ENCODE measurements at regions of chr17 and their contacts with region 1.

Region 1: DNA sequence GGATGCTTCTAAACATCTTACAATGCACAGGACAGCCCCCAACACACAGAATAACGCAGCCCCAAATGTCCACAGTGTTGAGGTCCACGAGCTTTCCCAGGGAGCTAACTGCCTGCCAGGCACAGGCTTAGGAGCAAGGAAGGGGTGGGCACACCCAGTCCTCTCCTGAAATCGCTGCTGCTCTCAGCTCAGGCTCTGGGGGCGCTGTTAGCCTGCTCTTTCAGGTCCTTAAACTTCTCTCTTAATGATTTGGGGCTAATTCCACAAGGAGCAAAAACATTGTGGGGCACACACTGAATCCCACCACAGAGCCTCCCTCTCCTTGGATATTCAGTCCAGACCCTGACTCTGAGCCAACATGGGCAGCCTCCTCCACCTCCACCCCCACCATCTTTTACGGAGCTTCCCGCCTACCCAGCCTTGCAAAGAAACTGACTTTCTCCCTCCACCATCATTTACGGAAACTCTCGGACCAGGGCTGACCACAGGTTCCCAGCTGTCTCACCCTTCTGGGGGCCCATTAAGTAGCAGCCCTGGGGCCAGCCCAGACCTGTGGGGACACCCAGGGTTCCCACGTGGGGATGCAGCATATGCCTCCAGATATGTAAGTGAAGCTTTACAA is 1.1 kb downstream of the CD300H start:
- H3K4me3 ChIP-seq: no peak overlapping the region
- H3K27ac ChIP-seq: no peak overlapping the region
- H3K4me1 ChIP-seq: no peaks in the 10 kb centered on the region
- CTCF ChIP-seq: peak; percentile 54

Region 2: DNA sequence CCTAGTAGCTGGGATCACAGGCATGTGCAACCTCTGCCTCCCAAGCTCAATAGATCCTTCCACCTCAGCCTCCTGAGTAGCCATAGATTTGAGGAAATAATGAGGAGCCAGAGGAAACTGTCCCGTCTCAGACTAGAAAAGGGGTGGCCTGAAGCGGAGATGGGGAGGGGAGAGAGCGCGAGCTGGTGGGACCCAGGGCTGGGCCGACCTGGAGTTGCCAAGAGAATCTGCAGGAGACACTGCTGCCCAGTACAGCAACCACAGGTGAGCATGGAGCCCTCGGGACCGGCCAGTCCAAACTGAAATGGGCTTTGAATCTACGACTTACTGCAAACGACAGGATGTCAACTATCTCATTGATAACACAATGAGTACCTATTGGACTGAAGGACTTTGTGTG is 75.5 kb before region 1 on chr17:
- CTCF ChIA-PET with region 1: no interaction called
- POLR2A ChIA-PET with region 1: no interaction called
- H3K4me3 ChIP-seq: no peak overlapping the region
- H3K27ac ChIP-seq: no peak overlapping the region
- H3K4me1 ChIP-seq: no peaks in the 10 kb centered on the region
- CTCF ChIP-seq: no peak

Region 3: GRCh38 chr17:74508156-74508555 is 58.1 kb before region 1 on chr17:
- CTCF ChIA-PET with region 1: interaction called, 11 read pairs
- POLR2A ChIA-PET with region 1: no interaction called
- H3K4me3 ChIP-seq: no peak overlapping the region
- H3K27ac ChIP-seq: no peak overlapping the region
- H3K4me1 ChIP-seq: no peaks in the 10 kb centered on the region
- CTCF ChIP-seq: no peak

Region 4: DNA sequence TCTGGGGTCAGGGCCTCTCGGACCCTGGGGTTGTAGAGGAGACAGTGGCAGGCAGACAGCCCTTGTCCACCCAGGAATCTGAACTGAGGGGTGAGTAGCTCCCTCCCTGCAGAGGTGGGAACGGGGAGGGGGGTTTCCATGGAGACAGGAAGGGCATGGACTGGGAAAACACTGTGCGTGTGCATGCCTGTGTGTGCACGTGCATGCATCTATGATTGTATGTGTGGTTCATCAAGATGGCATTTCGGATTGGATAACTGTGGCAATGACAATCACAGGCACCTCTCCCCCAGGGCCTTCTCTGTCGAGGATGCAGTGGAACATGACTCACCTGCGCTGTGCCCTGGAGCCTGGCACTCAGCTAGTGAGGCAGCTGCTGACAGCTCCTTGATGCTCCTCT is 14.2 kb before region 1 on chr17:
- CTCF ChIA-PET with region 1: interaction called, 43 read pairs
- POLR2A ChIA-PET with region 1: no interaction called
- H3K4me3 ChIP-seq: no peak overlapping the region
- H3K27ac ChIP-seq: no peak overlapping the region
- H3K4me1 ChIP-seq: no peaks in the 10 kb centered on the region
- CTCF ChIP-seq: no peak

Region 5: DNA sequence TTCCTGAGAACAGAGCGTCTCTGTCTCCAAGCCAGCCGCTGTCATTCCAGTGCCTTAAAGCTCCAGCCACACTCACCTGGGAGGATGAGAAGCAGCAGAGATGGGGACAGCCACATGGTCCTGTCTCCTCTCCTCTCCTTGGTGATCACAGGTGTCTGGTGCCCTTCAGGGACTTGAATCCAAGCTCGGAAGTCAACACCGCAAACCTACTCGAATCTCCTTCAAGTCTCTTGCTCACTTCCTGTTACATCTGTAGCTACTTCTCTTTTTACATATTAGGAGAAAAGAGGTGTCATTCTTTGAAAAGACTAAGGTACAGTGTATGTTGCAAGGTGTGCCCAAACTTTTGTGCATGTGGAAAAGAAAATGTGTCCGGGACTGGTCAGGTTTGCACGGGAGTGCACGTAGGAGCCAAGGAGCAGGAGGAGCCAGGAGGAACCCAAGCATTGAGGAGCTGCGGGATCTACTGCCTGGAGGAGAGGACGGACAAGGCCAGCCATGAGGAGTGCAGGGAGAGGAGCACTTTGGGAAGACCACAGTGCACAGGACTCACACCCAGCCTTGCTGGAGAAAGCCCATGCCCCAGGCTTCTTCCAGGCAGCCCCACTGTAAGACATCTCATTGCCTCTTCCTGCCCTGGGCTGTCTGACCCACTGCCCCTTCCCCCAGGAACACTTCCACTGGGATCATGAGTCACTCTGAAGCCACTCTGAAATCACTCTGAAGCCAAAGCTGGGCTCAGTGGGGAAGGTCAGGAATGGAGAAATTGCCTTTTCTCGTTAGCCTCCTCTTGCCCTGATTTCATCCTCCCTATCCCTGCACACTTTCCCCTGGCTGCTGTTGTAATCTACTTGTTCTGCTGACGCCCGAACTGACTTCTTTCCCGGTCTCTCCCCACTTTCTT is 26.1 kb after region 1 on chr17 and contains the start of gene CD300LD:
- CTCF ChIA-PET with region 1: interaction called, 12 read pairs
- POLR2A ChIA-PET with region 1: no interaction called
- H3K4me3 ChIP-seq: no peak within 1 kb of the TSS
- H3K27ac ChIP-seq: no peak within 1 kb of the TSS
- H3K4me1 ChIP-seq: no peaks in the 10 kb centered on the region
- CTCF ChIP-seq: no peak

Region 6: GRCh38 chr17:74601944-74602572 is 35.8 kb after region 1 on chr17:
- CTCF ChIA-PET with region 1: interaction called, 10 read pairs
- POLR2A ChIA-PET with region 1: no interaction called
- H3K4me3 ChIP-seq: no peak overlapping the region
- H3K27ac ChIP-seq: no peak overlapping the region
- H3K4me1 ChIP-seq: no peaks in the 10 kb centered on the region
- CTCF ChIP-seq: peak; percentile 48

Region 7: GRCh38 chr17:74782571-74782970 is 216.3 kb after region 1 on chr17:
- CTCF ChIA-PET with region 1: no interaction called
- POLR2A ChIA-PET with region 1: no interaction called
- H3K4me3 ChIP-seq: no peak overlapping the region
- H3K27ac ChIP-seq: no peak overlapping the region
- H3K4me1 ChIP-seq: no peaks in the 10 kb centered on the region
- CTCF ChIP-seq: no peak